ENCODE measurements at regions of chr9 and their contacts with region 1.

Region 1: DNA sequence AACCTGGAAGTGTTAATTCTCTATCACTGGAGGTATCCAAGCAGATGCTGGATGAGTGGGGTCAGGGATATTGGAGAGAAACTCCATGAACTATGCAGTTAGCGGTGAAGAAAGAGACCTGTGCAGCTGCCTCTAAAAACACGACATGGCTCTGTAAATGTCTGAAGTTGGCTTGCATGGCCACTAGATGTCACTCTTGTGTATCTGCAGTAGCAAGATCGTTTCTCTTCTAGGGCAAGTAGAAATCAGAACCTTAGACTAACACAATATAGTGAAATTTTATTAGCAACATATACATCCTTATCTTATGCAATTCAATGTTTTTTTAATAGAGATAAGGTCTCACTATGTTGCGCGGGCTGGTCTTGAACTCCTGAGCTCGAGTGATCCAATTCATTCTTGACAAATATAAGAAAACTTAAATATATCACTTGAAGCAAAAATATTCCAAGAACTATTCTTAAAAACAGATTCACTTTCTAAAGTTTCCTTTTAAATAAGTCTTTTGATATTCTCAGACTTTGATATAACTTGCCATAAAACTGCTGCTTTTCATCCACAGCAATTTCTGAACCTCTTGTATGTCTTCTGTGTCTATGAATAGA is 2.9 kb downstream of the OR2S2 start:
- DNase-seq: peak; percentile 74
- H3K4me3 ChIP-seq: no peak overlapping the region
- H3K27ac ChIP-seq: no peak overlapping the region
- H3K4me1 ChIP-seq: no peaks in the 10 kb centered on the region
- H3K27me3 ChIP-seq: no peaks in the 10 kb centered on the region
- CTCF ChIP-seq: peak; percentile 29 to 75 (median 69)
- POLR2A ChIP-seq: no peak

Region 2: DNA sequence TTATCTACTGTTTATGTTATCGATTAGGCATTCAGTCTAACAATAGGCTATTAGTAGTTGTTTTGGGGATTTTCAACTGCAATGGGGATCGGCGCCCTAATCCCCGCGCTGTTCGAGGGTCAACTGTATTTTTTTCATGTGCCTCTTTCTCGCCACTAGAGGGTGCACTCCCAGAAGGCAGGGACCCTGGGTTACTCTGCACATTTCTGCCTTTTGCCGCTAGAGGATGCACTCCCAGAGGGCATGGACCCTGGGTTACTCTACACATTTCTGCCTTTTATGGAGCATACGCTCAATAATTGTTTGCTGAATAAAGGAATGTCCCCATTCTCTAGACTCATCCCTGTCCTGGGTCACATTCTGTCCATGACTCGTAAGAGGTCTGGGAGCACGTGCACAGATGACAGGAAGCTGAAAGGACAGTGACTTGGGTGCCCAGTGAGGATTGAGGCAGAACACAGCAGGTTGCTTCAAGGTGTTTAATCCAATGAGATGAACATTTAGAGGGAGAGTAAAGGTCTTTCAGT is 53.8 kb after region 1 on chr9:
- intact Hi-C with region 1: loop called (anchors 10 kb)
- DNase-seq: peak; percentile 77
- H3K4me3 ChIP-seq: no peak overlapping the region
- H3K27ac ChIP-seq: no peak overlapping the region
- H3K4me1 ChIP-seq: no peaks in the 10 kb centered on the region
- H3K27me3 ChIP-seq: no peaks in the 10 kb centered on the region
- CTCF ChIP-seq: peak; percentile 87 to 96 (median 91)
- POLR2A ChIP-seq: no peak

Region 3: DNA sequence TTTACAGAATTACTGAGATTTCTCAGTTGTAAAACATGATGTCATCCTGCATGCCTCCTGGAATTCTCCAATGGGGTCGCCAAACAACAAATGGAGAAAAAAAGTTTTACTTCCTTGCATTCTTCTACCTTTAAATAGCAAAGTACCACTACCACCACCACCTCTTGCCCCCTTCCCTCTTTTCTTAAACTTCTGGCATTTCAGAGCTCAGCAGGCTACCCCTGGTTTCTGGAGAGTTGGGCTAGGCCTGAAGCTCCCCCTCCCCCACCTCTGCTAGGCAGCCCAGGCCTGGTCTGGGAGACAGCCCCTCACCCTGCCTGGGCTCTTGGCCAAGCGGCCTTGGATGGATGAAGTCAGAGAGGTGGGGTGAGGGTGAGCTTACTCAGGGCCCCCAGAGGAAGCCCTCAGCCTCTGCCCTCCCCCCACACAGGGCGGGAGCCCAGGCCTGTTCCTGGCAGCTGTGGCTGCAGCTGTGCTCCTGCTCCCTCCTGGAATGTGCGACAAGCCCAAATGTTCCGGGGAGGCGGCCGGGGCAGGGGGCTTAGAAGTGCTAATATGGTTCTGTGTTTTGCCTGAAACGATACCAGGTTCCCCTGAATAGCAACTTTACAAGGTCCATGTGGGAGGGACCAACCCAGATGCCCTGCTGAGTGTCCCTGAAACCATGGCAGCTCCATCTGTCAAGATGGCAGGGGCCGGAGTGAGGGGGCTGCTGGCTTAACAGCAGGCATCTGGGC is 208.2 kb after region 1 on chr9:
- intact Hi-C with region 1: no loop called
- DNase-seq: peak; percentile 60
- H3K4me3 ChIP-seq: no peak overlapping the region
- H3K27ac ChIP-seq: peak overlapping the region; percentile 57 to 81
- H3K4me1 ChIP-seq: peaks cover 9% of the 10 kb centered on the region
- H3K27me3 ChIP-seq: no peaks in the 10 kb centered on the region
- CTCF ChIP-seq: no peak
- POLR2A ChIP-seq: no peak

Region 4: GRCh38 chr9:36189976-36190375 is 234.9 kb after region 1 on chr9:
- intact Hi-C with region 1: loop called (anchors 10 kb)
- DNase-seq: no peak
- H3K4me3 ChIP-seq: peak overlapping the region; percentile 71 to 88
- H3K27ac ChIP-seq: peak overlapping the region; percentile 87 to 90
- H3K4me1 ChIP-seq: peaks cover 33% of the 10 kb centered on the region
- H3K27me3 ChIP-seq: no peaks in the 10 kb centered on the region
- CTCF ChIP-seq: peak in 1 of 3 experiments; percentile 10
- POLR2A ChIP-seq: no peak